ENCODE measurements at regions of chr6 and their contacts with region 1.

Region 1: GRCh38 chr6:137291441-137291840 is 72.3 kb upstream of the IFNGR1 start:
- DNase-seq: no peak
- H3K4me3 ChIP-seq: no peak overlapping the region
- H3K27ac ChIP-seq: no peak overlapping the region
- H3K4me1 ChIP-seq: no peaks in the 10 kb centered on the region
- CTCF ChIP-seq: no peak

Region 2: DNA sequence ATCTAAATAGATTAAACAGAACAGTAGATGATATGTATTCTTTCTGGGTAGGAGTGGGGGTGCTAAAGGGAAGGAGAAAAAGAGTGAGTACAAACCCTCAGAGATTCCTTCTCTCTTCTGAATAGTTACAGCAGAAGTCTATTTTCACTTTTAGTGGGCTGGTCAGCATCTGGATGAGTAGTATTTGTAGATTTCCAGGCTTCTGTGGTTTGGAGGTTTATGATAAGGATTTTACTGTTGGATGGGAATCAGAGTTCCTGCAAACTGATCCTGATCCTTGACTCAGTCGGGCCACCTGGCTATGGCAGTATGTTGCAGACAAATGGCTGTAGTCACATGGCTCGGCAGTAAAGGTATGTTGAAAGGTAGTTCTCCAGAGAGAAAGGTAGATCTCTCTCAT is 12.0 kb after region 1 on chr6:
- CTCF ChIA-PET with region 1: no interaction called
- POLR2A ChIA-PET with region 1: no interaction called
- intact Hi-C with region 1: loop called (anchors 1 kb)
- DNase-seq: no peak
- H3K4me3 ChIP-seq: no peak overlapping the region
- H3K27ac ChIP-seq: no peak overlapping the region
- H3K4me1 ChIP-seq: peaks cover 8% of the 10 kb centered on the region
- CTCF ChIP-seq: no peak

Measured in OCI-LY7 (cell line).